IMR-90 (cell line): ENCODE measurements at regions of chr16 and their contacts with region 1.

Region 1: GRCh38 chr16:14309001-14309886 is 238.1 kb downstream of the MRTFB start:
- DNase-seq: peak; percentile 39
- ATAC-seq: peak; percentile 9; the same call in 1 of the 2 replicates
- H3K4me3 ChIP-seq: no peak overlapping the region
- H3K27ac ChIP-seq: peak overlapping the region; percentile 64
- H3K4me1 ChIP-seq: peaks cover 35% of the 10 kb centered on the region
- H3K27me3 ChIP-seq: no peaks in the 10 kb centered on the region
- CTCF ChIP-seq: no peak
- POLR2A ChIP-seq: no peak
- RAD21 ChIP-seq: no peak

Region 2: DNA sequence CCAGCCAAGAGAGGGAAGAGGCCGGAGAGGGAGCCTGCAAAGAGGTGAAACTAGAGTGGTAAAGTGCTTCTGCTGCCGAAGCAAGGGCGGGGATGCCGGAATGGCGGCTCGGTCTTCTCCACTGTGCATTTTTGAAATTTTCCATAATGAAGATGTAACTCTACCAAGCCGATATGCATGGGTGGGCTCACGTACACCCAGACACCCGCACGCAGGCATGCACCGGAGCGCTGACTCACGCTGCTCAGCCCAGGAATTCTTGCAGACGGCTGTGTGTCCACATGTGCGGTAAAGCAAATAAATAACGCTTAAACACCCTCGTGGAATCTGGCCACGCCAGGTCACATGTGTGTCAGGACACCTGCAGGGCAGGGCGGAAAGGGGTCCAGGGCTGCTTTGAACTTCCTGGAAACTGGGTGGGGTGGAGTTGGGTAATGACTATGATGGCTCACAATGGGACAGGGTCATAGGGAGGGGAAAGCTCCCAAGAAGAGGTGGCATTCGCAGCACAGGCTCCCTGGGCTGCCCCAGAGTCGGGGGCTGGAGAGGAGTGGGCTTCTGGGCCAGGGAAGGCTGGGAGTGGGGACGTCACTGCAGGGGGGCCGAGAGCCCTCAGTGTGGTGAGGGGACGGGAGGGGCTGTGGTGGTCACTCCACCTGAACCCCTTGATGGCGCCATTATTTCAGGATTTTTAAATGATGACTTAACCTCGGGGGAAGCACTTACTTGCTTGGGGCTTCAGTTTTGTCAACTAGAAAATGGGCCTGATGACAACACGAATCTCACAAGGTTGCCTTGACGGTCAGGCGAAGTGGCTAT is 55.4 kb after region 1 on chr16:
- CTCF ChIA-PET with region 1: interaction called, 3 read pairs
- POLR2A ChIA-PET with region 1: no interaction called
- dilution Hi-C with region 1: no loop called
- in situ Hi-C with region 1: loop called (anchors 5 kb)
- intact Hi-C with region 1: no loop called
- DNase-seq: peak; percentile 89
- ATAC-seq: peak; percentile 63
- H3K4me3 ChIP-seq: no peak overlapping the region; the same call in 1 of the 2 replicates
- H3K27ac ChIP-seq: 0 out of 2 replicates have a peak overlapping the region, but pooled peaks have one; percentile 11
- H3K4me1 ChIP-seq: peaks cover 10% of the 10 kb centered on the region
- H3K27me3 ChIP-seq: no peaks in the 10 kb centered on the region; the same call in 1 of the 2 replicates
- CTCF ChIP-seq: no peak
- POLR2A ChIP-seq: no peak
- RAD21 ChIP-seq: no peak